Breast epithelium (tissue), 4 donors: ENCODE measurements at regions of chr6 and their contacts with region 1.

Region 1: GRCh38 chr6:148964467-148964866 is 217.6 kb downstream of the UST start:
- DNase-seq: no peak
- H3K4me3 ChIP-seq: no peak overlapping the region
- H3K27ac ChIP-seq: no peak overlapping the region
- H3K4me1 ChIP-seq: no peaks in the 10 kb centered on the region
- H3K27me3 ChIP-seq: no peaks in the 10 kb centered on the region
- CTCF ChIP-seq: no peak
- POLR2A ChIP-seq: no peak

Region 2: GRCh38 chr6:148898376-148899014 is 66.0 kb before region 1 on chr6:
- intact Hi-C with region 1: no loop called
- DNase-seq: no peak
- H3K4me3 ChIP-seq: no peak overlapping the region
- H3K27ac ChIP-seq: peak overlapping the region in 1 of 2 donors; percentile 18
- H3K4me1 ChIP-seq: no peaks in the 10 kb centered on the region
- H3K27me3 ChIP-seq: no peaks in the 10 kb centered on the region
- CTCF ChIP-seq: no peak
- POLR2A ChIP-seq: no peak

Region 3: DNA sequence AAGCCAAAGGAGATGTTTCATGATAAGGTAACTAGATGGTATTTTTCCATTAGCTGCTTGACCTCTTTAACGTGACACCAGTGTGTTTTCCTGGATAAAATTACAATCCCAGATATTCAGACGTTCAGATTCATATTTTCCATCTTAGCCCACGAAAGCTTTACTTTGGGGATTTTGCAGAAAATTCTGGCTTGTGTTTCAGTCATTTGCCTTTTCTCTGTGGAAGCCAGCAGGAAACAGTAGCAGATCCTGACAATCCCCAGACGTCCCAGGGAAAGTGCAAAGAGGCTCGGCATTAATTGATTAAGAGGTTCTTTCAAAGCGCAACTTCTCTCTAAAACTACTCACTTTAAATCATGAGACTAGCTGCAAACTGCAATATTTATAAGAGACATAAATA is 25.9 kb after region 1 on chr6:
- intact Hi-C with region 1: loop called (anchors 1 kb)
- DNase-seq: no peak
- H3K4me3 ChIP-seq: no peak overlapping the region
- H3K27ac ChIP-seq: peak overlapping the region in 1 of 2 donors; percentile 45
- H3K4me1 ChIP-seq: no peaks in the 10 kb centered on the region
- H3K27me3 ChIP-seq: no peaks in the 10 kb centered on the region
- CTCF ChIP-seq: no peak
- POLR2A ChIP-seq: no peak